HepG2 (cell line): ENCODE measurements at regions of chr1 and their contacts with region 1.

Region 1: DNA sequence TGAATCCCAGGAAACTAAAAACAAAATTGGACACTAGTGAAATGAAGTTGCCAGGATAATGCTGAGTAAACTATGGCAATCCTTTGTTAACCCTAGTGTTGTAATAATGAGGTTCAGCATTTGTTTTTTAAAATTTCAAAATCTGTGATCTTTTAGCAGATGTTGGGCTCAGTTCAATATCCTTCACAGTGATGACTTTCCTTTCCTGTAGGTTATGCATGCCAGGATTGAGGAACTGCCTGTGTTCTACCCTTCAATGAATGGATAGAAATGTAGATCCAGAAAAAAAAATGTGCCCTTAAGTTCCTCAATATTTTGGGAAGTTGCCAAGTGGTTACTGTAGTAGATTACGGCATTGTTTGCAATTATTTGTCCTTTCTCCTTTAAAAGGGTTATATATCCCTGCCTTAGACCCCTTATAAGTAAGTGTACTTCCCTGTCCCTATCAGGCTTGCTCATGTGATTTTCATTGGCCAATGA is 35.5 kb upstream of the IRF2BP2 start:
- DNase-seq: no peak
- ATAC-seq: no peak
- H3K4me3 ChIP-seq: no peak overlapping the region
- H3K27ac ChIP-seq: peak overlapping the region; percentile 83
- H3K4me1 ChIP-seq: peaks cover 63% of the 10 kb centered on the region
- H3K27me3 ChIP-seq: no peaks in the 10 kb centered on the region
- CTCF ChIP-seq: no peak
- EP300 ChIP-seq: no peak
- POLR2A ChIP-seq: no peak
- RAD21 ChIP-seq: no peak

Region 2: GRCh38 chr1:234544087-234544579 is 101.4 kb before region 1 on chr1:
- CTCF ChIA-PET with region 1: no interaction called
- POLR2A ChIA-PET with region 1: no interaction called
- in situ Hi-C with region 1: no loop called
- intact Hi-C with region 1: no loop called
- DNase-seq: peak; percentile 78
- ATAC-seq: peak; percentile 24
- H3K4me3 ChIP-seq: peak overlapping the region in 1 of 3 experiments; percentile 67; a peak in 1 of 6 replicates
- H3K27ac ChIP-seq: peak overlapping the region; percentile 18
- H3K4me1 ChIP-seq: peaks cover 58% of the 10 kb centered on the region
- H3K27me3 ChIP-seq: peaks cover 2 to 6% of the 10 kb centered on the region in 2 experiments; a peak in 3 of 5 replicates
- CTCF ChIP-seq: no peak
- EP300 ChIP-seq: no peak
- POLR2A ChIP-seq: no peak
- RAD21 ChIP-seq: no peak

Region 3: GRCh38 chr1:234617131-234617985 is 28.2 kb before region 1 on chr1:
- CTCF ChIA-PET with region 1: no interaction called
- POLR2A ChIA-PET with region 1: interaction called, 106 read pairs
- in situ Hi-C with region 1: no loop called
- intact Hi-C with region 1: loop called (anchors 1 kb)
- DNase-seq: no peak
- ATAC-seq: no peak
- H3K4me3 ChIP-seq: no peak overlapping the region
- H3K27ac ChIP-seq: peak overlapping the region; percentile 99
- H3K4me1 ChIP-seq: peaks cover 97% of the 10 kb centered on the region
- H3K27me3 ChIP-seq: no peaks in the 10 kb centered on the region
- CTCF ChIP-seq: no peak
- EP300 ChIP-seq: no peak
- POLR2A ChIP-seq: no peak
- RAD21 ChIP-seq: no peak

Region 4: GRCh38 chr1:234631721-234632125 is 13.8 kb before region 1 on chr1:
- CTCF ChIA-PET with region 1: no interaction called
- POLR2A ChIA-PET with region 1: interaction called, 11 read pairs
- in situ Hi-C with region 1: no loop called
- intact Hi-C with region 1: no loop called
- DNase-seq: peak; percentile 90
- ATAC-seq: peak; percentile 66
- H3K4me3 ChIP-seq: no peak overlapping the region
- H3K27ac ChIP-seq: peak overlapping the region; percentile 60
- H3K4me1 ChIP-seq: peaks cover 80% of the 10 kb centered on the region
- H3K27me3 ChIP-seq: no peaks in the 10 kb centered on the region
- CTCF ChIP-seq: no peak
- EP300 ChIP-seq: peak in 1 of 2 experiments; percentile 82; a peak in 2 of 4 replicates
- POLR2A ChIP-seq: no peak
- RAD21 ChIP-seq: no peak

Region 5: GRCh38 chr1:234683861-234684632 is 38.5 kb after region 1 on chr1:
- CTCF ChIA-PET with region 1: no interaction called
- POLR2A ChIA-PET with region 1: interaction called, 4 read pairs
- in situ Hi-C with region 1: no loop called
- intact Hi-C with region 1: loop called (anchors 1 kb)
- DNase-seq: peak; percentile 97
- ATAC-seq: peak; percentile 100
- H3K4me3 ChIP-seq: no peak overlapping the region
- H3K27ac ChIP-seq: peak overlapping the region; percentile 87
- H3K4me1 ChIP-seq: peaks cover 21% of the 10 kb centered on the region
- H3K27me3 ChIP-seq: no peaks in the 10 kb centered on the region
- CTCF ChIP-seq: 0 out of 2 replicates have a peak, but pooled peaks have one; percentile 22
- EP300 ChIP-seq: peak; percentile 79 to 93; a peak in 3 of 4 replicates
- POLR2A ChIP-seq: no peak
- RAD21 ChIP-seq: no peak; the same call in 1 of the 2 replicates